Activated naive CD4-positive, alpha-beta T cell treated with anti-CD3 and anti-CD28 coated beads for 36 hours (primary cell): ENCODE measurements at regions of chr3 and their contacts with region 1.

Region 1: DNA sequence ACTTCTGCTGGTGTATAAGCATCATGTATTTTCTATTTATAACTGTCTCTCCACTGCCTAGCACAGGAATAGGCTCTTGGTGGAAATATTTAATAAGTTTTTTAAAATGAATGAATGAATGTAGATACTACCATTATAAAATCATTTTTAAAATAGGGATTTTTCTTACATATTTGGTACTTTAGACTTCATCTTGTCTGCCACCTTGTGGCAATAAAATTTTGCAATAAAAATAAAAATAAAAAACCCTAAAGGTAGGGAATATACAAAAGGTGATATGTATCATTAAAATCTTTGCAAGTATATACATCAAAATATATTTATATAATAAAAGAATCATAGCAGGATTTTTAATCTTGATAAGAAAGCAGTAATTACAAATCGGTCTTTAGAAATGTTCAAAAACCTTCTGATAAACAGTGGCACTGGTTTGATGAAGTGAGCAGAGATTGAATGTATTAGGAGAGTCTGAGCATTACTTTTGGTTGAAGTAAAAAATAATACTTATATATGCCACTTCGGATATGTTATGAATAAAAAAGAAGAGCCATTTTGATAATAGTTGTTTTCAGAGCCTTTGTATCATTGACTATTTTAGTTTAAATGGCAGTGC is 95.2 kb downstream of the SPATA16 start:
- DNase-seq: no peak
- H3K4me3 Mint-ChIP-seq: no peak overlapping the region
- H3K27ac Mint-ChIP-seq: no peak overlapping the region
- H3K4me1 Mint-ChIP-seq: no peaks in the 10 kb centered on the region
- H3K27me3 Mint-ChIP-seq: no peaks in the 10 kb centered on the region

Region 2: GRCh38 chr3:172836390-172836997 is 209.4 kb before region 1 on chr3:
- CTCF ChIA-PET with region 1: interaction called, 3 read pairs
- intact Hi-C with region 1: loop called (anchors 5 kb)
- DNase-seq: peak; percentile 40
- H3K4me3 Mint-ChIP-seq: no peak overlapping the region
- H3K27ac Mint-ChIP-seq: no peak overlapping the region
- H3K4me1 Mint-ChIP-seq: no peaks in the 10 kb centered on the region
- H3K27me3 Mint-ChIP-seq: peaks cover 2% of the 10 kb centered on the region